ENCODE measurements at regions of chr1 and their contacts with region 1.

Region 1: DNA sequence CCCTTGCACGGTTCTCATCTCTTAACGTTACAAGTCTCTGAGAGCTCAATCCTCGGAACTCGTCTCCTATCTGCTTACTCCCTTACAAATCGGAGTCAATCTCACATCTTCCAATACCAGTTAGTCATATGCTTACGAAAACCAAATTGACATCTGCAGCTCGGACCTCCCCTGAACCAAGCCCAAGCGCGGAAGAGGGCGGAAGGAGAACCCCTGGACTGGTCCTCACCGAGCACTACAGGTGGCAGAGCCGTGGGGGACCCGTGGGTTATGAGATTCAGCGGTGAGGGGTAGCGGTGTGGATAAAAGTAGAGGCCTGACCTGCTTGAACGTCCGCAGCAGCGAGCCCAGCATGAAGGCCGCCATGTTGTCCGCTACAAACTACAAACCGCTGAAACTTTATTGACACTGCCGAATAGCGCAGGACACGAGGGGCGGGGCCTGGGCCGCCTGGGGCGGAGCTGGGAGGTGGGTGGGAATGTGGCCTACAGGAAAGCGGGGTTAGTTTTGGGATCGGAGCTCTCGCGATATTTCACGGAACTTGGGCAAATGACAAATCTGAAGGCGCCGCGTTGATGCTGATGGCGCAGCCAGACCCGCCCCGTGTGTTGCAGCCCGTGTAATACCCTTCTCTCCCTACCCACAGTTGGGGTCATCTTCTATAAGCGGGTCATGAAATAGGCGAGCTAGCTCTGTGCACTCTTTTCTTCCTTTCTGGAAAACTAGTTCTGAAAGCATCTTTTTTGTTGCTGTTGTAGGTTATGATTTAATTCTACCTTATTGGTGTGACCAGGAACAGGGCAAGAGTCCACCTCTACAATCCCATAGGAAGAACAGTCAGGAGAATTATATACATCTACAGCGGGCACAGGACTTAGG is at the start of gene MRPS14:
- DNase-seq: peak; percentile 96 to 99 (median 98)
- ATAC-seq: peak; percentile 91
- H3K4me3 ChIP-seq: peak within 1 kb of the TSS; percentile 72 to 96
- H3K4me3 Mint-ChIP-seq: peak within 1 kb of the TSS; percentile 91
- H3K27ac ChIP-seq: peak within 1 kb of the TSS; percentile 83 to 93
- H3K27ac Mint-ChIP-seq: peak within 1 kb of the TSS; percentile 94
- H3K4me1 ChIP-seq: peaks cover 6% of the 10 kb centered on the region
- H3K4me1 Mint-ChIP-seq: peaks cover 32% of the 10 kb centered on the region
- H3K27me3 ChIP-seq: no peaks in the 10 kb centered on the region
- H3K27me3 Mint-ChIP-seq: no peaks in the 10 kb centered on the region
- CTCF ChIP-seq: no peak
- total RNA-seq, gene MRPS14: 6.8 to 7.3 TPM

Region 2: DNA sequence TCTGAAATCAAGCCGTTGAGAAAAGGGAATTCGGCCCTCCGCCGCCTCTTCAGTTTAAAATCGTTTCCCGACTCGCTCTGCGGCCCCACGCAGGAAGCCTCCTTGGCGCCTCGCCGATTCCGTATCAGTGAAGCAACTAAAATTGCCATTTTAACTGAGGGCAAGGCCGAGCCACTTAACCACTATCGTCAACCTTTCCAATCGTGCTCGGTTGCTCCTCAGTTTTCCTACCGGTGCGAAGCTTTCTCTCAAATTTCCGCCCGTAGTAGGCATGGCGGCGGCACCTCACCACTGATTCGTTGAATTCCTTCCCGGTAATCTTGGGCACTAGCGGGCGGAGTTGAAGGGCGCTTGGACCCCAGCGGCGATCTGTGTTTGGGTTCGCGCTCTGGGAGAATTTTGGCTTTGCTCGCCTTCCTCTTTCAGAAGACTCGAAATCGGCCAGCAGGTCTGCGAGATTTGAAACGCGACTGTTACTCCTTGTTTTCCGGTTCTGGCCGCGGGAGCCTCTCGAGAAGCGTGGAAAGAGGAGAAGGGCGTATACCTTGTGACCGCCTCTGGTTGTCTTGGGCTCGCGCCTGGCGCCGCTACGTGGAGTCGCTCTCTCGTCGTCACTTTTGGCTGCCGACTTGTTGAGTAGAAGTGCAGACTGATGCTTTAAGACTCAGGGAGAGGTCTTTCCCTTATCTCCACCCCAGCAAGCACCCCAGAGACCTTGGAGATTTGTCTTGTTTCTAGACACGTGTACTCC is 1198.8 kb before region 1 on chr1 and contains the starts of genes CENPL and DARS2:
- CTCF ChIA-PET with region 1: no interaction called
- POLR2A ChIA-PET with region 1: interaction called, 4 read pairs
- intact Hi-C with region 1: loop called (anchors 1 to 5 kb)
- DNase-seq: peak; percentile 79 to 97 (median 90)
- ATAC-seq: peak; percentile 86
- H3K4me3 ChIP-seq: peak within 1 kb of the TSS; percentile 92 to 97
- H3K4me3 Mint-ChIP-seq: peak within 1 kb of the TSS; percentile 93
- H3K27ac ChIP-seq: peak within 1 kb of the TSS; percentile 78 to 87
- H3K27ac Mint-ChIP-seq: peak within 1 kb of the TSS; percentile 90
- H3K4me1 ChIP-seq: peaks cover 11% of the 10 kb centered on the region
- H3K4me1 Mint-ChIP-seq: peaks cover 54% of the 10 kb centered on the region
- H3K27me3 ChIP-seq: no peaks in the 10 kb centered on the region
- H3K27me3 Mint-ChIP-seq: no peaks in the 10 kb centered on the region
- CTCF ChIP-seq: no peak
- total RNA-seq, gene CENPL: 4.0 to 5.7 TPM
- total RNA-seq, gene DARS2: 1.5 to 1.6 TPM

Region 3: GRCh38 chr1:174159252-174160108 is 863.8 kb before region 1 on chr1 and contains the start of gene RABGAP1L:
- CTCF ChIA-PET with region 1: no interaction called
- POLR2A ChIA-PET with region 1: no interaction called
- intact Hi-C with region 1: loop called (anchors 5 kb)
- DNase-seq: peak; percentile 90 to 98 (median 93)
- ATAC-seq: peak; percentile 90
- H3K4me3 ChIP-seq: peak within 1 kb of the TSS; percentile 73 to 74
- H3K4me3 Mint-ChIP-seq: peak within 1 kb of the TSS; percentile 91
- H3K27ac ChIP-seq: peak within 1 kb of the TSS; percentile 73 to 93
- H3K27ac Mint-ChIP-seq: peak within 1 kb of the TSS; percentile 96
- H3K4me1 ChIP-seq: peaks cover 16% of the 10 kb centered on the region
- H3K4me1 Mint-ChIP-seq: peaks cover 53% of the 10 kb centered on the region
- H3K27me3 ChIP-seq: no peaks in the 10 kb centered on the region
- H3K27me3 Mint-ChIP-seq: no peaks in the 10 kb centered on the region
- CTCF ChIP-seq: no peak
- total RNA-seq, gene RABGAP1L: 60.7 to 65.1 TPM

Region 4: DNA sequence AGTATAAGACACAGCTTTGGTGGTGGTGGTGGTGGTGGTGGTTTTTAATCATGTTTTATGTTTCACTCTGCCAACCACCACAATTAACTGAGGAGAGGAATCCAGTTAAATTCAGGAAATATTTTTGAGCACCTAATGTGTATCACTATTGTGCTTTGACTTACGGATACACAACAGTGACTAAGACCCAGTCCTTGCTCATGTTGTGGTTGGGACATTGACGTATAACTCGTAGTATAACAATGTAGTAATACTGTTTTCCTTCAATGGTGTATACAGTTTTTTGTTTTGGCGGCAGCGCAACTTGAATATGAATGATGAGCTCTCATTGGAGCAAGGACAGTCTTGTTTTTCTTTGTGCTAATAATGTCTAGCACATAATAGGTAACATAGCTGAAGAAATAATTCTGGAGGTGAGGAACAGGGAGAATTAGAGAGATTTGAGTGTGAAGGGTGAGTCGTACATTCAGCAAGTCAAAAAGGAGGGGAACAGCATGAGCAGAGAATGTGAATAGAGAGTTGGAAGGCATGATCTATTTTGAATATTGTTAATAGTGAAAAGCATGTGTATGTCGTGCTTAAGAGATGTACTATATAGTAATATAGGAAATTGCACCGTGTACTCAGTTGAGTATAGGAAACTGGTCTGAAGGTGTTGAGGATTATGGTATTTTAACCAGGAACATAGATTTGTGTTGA is 18.0 kb before region 1 on chr1:
- CTCF ChIA-PET with region 1: interaction called, 19 read pairs
- POLR2A ChIA-PET with region 1: interaction called, 148 read pairs
- intact Hi-C with region 1: loop called in 1 of 2 experiments (anchors 1 kb)
- DNase-seq: no peak
- ATAC-seq: no peak
- H3K4me3 ChIP-seq: no peak overlapping the region
- H3K4me3 Mint-ChIP-seq: no peak overlapping the region
- H3K27ac ChIP-seq: no peak overlapping the region
- H3K27ac Mint-ChIP-seq: peak overlapping the region; percentile 2
- H3K4me1 ChIP-seq: peaks cover 18% of the 10 kb centered on the region
- H3K4me1 Mint-ChIP-seq: peaks cover 54% of the 10 kb centered on the region
- H3K27me3 ChIP-seq: no peaks in the 10 kb centered on the region
- H3K27me3 Mint-ChIP-seq: no peaks in the 10 kb centered on the region
- CTCF ChIP-seq: no peak

Region 5: GRCh38 chr1:175192630-175193526 is 169.6 kb after region 1 on chr1 and contains the start of gene KIAA0040:
- CTCF ChIA-PET with region 1: no interaction called
- POLR2A ChIA-PET with region 1: interaction called, 4 read pairs
- intact Hi-C with region 1: loop called (anchors 5 to 10 kb)
- DNase-seq: peak in 8 of 9 experiments; percentile 27 to 82 (median 56)
- ATAC-seq: peak; percentile 65
- H3K4me3 ChIP-seq: peak within 1 kb of the TSS; percentile 78 to 96
- H3K4me3 Mint-ChIP-seq: peak within 1 kb of the TSS; percentile 91
- H3K27ac ChIP-seq: peak within 1 kb of the TSS; percentile 64 to 84
- H3K27ac Mint-ChIP-seq: peak within 1 kb of the TSS; percentile 88
- H3K4me1 ChIP-seq: peaks cover 48% of the 10 kb centered on the region
- H3K4me1 Mint-ChIP-seq: peaks cover 60% of the 10 kb centered on the region
- H3K27me3 ChIP-seq: no peaks in the 10 kb centered on the region
- H3K27me3 Mint-ChIP-seq: no peaks in the 10 kb centered on the region
- CTCF ChIP-seq: no peak
- total RNA-seq, gene KIAA0040: 8.7 to 9.6 TPM